ENCODE measurements at regions of chr5 and their contacts with region 1.

Region 1: GRCh38 chr5:109589986-109590385 is 99.7 kb upstream of the MAN2A1 start:
- DNase-seq: peak in 2 of 9 experiments; percentile 31 to 49
- ATAC-seq: peak; percentile 40
- H3K4me3 ChIP-seq: no peak overlapping the region
- H3K4me3 Mint-ChIP-seq: no peak overlapping the region
- H3K27ac ChIP-seq: no peak overlapping the region
- H3K27ac Mint-ChIP-seq: no peak overlapping the region
- H3K4me1 ChIP-seq: peaks cover 10% of the 10 kb centered on the region
- H3K4me1 Mint-ChIP-seq: peaks cover 19% of the 10 kb centered on the region
- H3K27me3 ChIP-seq: no peaks in the 10 kb centered on the region
- H3K27me3 Mint-ChIP-seq: no peaks in the 10 kb centered on the region
- CTCF ChIP-seq: no peak

Region 2: DNA sequence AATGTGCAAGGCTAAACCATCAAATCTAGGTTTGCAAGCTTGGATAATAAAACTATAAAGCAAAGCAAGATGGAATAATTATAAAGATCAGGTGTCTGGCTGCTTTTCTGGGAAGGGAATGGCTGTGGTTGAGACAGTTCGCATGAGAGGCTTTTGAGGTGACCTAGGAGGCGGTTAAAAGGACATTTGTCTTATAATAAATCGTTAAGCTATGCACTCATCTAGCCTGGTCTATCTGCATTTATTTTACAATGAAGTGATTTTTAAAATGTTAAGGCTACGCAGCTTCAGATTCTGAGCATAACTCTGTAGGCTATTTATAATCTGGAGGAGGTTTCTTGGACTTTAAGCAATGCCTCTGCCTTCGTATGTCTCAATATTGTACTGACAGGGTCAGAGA is 70.3 kb after region 1 on chr5:
- CTCF ChIA-PET with region 1: no interaction called
- POLR2A ChIA-PET with region 1: no interaction called
- intact Hi-C with region 1: no loop called
- DNase-seq: no peak
- ATAC-seq: no peak
- H3K4me3 ChIP-seq: no peak overlapping the region
- H3K4me3 Mint-ChIP-seq: no peak overlapping the region
- H3K27ac ChIP-seq: no peak overlapping the region
- H3K27ac Mint-ChIP-seq: no peak overlapping the region
- H3K4me1 ChIP-seq: peaks cover 11% of the 10 kb centered on the region
- H3K4me1 Mint-ChIP-seq: peaks cover 14% of the 10 kb centered on the region
- H3K27me3 ChIP-seq: no peaks in the 10 kb centered on the region
- H3K27me3 Mint-ChIP-seq: no peaks in the 10 kb centered on the region
- CTCF ChIP-seq: no peak

Region 3: DNA sequence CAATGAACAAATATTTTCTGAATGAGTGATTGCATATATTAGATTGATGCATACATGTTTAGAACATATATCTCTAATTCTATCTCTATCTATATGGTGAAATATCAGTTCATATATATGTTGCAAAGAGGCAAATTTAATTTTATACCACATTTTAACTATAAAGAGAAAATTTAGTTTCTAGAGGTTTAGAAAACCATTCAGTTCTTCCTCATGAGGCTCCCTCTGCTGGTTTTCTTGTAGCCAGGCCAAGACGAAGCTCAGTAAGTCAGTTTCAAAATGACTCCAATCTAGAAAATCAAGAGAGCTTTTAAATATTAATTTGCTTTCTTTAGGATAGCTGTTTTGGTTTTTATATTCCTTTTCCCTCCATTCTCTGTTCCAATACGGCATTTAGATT is 824.4 kb after region 1 on chr5:
- CTCF ChIA-PET with region 1: no interaction called
- POLR2A ChIA-PET with region 1: no interaction called
- intact Hi-C with region 1: loop called in 1 of 2 experiments (anchors 10 kb)
- DNase-seq: peak in 2 of 9 experiments; percentile 12 to 13
- ATAC-seq: no peak
- H3K4me3 ChIP-seq: no peak overlapping the region
- H3K4me3 Mint-ChIP-seq: no peak overlapping the region
- H3K27ac ChIP-seq: no peak overlapping the region
- H3K27ac Mint-ChIP-seq: no peak overlapping the region
- H3K4me1 ChIP-seq: no peaks in the 10 kb centered on the region
- H3K4me1 Mint-ChIP-seq: peaks cover 4% of the 10 kb centered on the region
- H3K27me3 ChIP-seq: no peaks in the 10 kb centered on the region
- H3K27me3 Mint-ChIP-seq: no peaks in the 10 kb centered on the region
- CTCF ChIP-seq: peak; percentile 18

Measured in CD8-positive, alpha-beta T cell (primary cell).